HEK293 (cell line): ENCODE measurements at regions of chr9 and their contacts with region 1.

Region 1: DNA sequence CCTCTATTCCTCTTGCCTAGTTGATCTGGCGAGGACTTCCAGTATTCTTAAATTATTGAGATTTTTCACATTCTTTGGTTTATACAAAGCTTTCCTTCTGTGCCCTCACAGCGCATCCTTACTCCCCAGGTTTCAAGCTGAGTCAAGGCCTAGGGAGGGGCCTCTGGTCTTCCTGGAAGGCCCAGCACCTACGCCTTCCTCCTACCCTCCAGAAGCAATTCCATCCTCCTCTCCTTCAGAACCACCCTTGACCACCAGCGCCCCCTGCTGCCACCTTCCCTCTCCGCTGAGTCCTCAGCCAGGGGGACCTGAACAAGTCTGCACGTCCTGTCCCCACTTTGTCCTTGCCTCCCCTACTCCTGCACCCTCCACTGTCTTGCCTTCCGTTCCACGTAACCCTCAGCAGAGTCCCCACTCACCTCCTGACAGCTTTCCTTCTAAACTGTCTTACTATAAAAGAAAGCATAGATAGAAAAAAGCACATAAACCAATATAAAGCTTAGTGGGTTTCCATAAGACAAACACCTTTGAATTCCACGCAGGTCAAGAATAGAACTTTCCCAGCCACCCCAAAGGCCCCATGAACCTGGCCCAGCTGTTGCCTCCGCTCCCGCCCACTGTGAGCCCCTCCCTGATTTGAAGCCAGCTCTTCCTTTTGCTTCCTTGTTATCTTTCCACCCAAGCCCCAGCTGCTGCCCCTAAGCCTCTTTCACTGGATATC is 63.0 kb upstream of the CTSL start:
- H3K4me3 ChIP-seq: no peak overlapping the region
- H3K27ac ChIP-seq: no peak overlapping the region
- H3K4me1 ChIP-seq: no peaks in the 10 kb centered on the region
- CTCF ChIP-seq: peak; percentile 82; the same call in 1 of the 2 replicates

Region 2: DNA sequence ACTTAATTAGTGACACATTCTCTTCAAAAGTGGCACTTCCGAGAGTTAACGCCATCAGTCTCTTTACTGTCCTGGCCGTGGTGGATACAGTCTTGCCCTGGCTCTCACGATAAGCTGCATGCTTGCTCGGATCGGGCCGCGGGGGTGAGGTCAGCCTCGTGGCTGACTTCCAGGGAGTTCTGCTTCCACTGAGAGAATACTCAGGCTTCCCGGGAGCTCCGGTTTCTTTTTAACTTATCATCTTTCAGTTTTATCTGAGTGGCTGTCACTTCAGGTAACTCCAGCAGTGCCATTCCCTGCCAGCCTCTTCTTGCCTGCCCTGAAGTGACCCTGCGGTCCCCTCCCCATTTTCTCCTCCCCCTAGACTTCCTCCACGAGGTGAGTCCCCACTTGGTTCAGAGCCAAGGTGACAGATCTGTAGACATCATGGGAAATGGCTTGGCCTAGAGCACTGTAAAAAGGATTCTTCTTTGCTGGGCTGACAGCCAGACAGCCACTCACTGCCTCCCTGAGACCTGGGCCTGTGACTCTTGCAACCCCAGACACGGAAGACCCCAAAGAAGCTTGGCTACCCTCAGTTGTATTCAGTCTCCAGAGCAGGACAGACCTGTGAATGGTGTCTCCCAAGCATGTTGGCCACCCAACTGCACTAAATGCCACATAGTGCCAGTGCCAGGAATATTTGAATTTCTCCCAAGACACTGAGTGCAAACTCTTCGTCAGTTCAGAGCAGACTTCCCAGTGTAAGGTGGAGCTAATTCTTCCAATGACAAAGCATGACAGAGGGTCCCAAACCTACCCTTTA is 70.2 kb before region 1 on chr9:
- CTCF ChIA-PET with region 1: interaction called, 13 read pairs
- POLR2A ChIA-PET with region 1: no interaction called
- H3K4me3 ChIP-seq: no peak overlapping the region
- H3K27ac ChIP-seq: peak overlapping the region; percentile 29; the same call in 1 of the 2 replicates
- H3K4me1 ChIP-seq: peaks cover 6% of the 10 kb centered on the region
- CTCF ChIP-seq: no peak

Region 3: GRCh38 chr9:87606841-87607521 is 56.0 kb before region 1 on chr9:
- CTCF ChIA-PET with region 1: no interaction called
- POLR2A ChIA-PET with region 1: no interaction called
- H3K4me3 ChIP-seq: no peak overlapping the region
- H3K27ac ChIP-seq: no peak overlapping the region
- H3K4me1 ChIP-seq: peaks cover 13% of the 10 kb centered on the region
- CTCF ChIP-seq: no peak